Prostate gland (tissue), 2 donors: ENCODE measurements at regions of chr19 and their contacts with region 1.

Region 1: DNA sequence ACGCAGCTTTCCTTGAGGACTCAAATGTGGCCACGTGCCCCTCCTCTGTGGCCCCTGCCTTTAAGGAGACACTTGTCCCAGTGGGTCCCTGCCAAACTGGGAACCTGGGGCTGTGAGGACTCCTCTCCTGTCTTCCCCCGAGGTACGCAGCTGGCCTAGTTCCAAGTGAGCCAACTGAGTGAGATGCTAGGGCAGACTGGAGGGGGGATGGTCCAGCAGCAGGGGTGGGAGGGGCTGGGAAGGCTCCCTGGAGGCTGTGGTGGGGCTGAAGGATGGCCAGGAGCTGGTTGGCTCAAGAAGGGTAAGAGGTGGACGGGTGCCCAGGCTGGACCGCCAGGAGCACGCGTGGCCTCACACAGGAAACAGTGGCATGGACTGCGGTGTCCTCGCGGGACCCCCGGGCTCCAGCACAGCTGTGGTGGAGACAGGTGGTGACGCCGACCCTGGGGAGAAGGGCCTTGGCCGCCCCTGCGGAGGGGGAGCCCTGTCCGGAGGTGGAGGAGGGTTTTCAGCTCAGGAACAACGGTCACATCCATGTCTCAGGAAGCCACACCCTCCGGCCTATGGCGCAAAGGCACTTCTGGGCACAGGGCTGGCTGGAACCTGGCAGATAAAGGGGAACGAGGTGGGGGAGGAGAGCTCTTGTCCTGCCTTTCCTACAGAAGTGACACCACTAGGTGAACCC is 45.8 kb downstream of the MLLT1 start:
- DNase-seq: no peak
- H3K4me3 ChIP-seq: no peak overlapping the region
- H3K27ac ChIP-seq: peak overlapping the region; percentile 60 to 67
- H3K4me1 ChIP-seq: peaks cover 43% of the 10 kb centered on the region
- H3K27me3 ChIP-seq: no peaks in the 10 kb centered on the region
- CTCF ChIP-seq: no peak
- POLR2A ChIP-seq: no peak

Region 2: DNA sequence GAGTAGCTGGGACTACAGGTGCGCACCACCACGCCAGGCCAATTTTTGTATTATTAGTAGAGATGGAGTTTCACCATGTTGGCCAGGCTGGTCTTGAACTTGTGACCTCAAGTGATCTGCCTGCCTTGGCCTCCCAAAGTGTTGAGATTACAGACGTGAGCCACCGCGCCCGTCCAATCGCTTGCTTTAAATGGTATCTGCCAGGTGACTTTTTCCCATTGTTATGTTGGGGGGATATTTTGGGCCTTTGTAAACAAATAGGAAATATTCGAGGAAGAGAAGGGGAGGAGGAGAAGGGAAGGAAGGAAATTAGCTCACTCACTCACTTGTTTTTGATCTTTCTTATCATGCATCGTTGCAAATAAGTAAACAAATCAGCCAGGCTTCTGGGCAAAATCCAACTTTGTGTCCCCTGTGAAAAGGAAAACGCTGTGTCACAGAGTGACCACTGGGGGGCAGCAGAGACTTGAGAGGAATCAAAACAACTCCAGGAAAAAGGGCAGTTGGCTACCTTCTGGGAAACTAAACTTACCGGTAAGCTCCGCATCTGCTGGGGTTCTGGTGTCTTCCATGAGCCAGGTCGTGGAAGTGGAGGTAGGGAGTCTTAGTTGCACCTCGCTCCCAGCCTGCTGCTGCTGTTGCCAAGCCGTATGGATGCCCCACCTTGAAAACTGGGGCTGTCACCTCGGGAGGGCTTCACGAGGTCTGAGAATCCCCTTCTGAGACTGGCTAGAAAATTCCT is 246.7 kb before region 1 on chr19:
- intact Hi-C with region 1: no loop called
- DNase-seq: peak; percentile 84
- H3K4me3 ChIP-seq: peak overlapping the region in 1 of 2 donors; percentile 16
- H3K27ac ChIP-seq: peak overlapping the region; percentile 20 to 33
- H3K4me1 ChIP-seq: peaks cover 8% of the 10 kb centered on the region
- H3K27me3 ChIP-seq: no peaks in the 10 kb centered on the region
- CTCF ChIP-seq: peak; percentile 92 to 98 (median 96)
- POLR2A ChIP-seq: no peak

Region 3: DNA sequence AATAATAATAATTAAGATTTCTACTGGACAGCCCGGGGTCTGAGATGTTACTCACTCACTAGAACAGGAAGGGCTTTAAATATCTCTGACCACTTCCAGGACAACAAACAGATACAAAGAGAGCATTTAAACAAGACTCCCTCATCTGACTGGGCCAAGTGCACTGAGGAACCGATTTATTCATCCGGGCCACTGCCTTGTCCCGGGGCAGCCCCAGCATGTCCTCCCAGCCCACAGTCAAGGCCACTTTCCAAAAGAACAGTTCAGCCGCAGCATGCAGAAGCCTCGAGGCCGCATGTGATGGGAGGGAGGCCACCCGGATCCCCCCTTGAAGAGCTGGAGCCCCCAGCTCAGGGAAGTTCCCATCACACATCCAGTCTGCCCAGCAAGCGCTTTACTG is 15.3 kb after region 1 on chr19:
- intact Hi-C with region 1: no loop called
- DNase-seq: no peak
- H3K4me3 ChIP-seq: no peak overlapping the region
- H3K27ac ChIP-seq: no peak overlapping the region
- H3K4me1 ChIP-seq: no peaks in the 10 kb centered on the region
- H3K27me3 ChIP-seq: no peaks in the 10 kb centered on the region
- CTCF ChIP-seq: no peak
- POLR2A ChIP-seq: no peak

Region 4: DNA sequence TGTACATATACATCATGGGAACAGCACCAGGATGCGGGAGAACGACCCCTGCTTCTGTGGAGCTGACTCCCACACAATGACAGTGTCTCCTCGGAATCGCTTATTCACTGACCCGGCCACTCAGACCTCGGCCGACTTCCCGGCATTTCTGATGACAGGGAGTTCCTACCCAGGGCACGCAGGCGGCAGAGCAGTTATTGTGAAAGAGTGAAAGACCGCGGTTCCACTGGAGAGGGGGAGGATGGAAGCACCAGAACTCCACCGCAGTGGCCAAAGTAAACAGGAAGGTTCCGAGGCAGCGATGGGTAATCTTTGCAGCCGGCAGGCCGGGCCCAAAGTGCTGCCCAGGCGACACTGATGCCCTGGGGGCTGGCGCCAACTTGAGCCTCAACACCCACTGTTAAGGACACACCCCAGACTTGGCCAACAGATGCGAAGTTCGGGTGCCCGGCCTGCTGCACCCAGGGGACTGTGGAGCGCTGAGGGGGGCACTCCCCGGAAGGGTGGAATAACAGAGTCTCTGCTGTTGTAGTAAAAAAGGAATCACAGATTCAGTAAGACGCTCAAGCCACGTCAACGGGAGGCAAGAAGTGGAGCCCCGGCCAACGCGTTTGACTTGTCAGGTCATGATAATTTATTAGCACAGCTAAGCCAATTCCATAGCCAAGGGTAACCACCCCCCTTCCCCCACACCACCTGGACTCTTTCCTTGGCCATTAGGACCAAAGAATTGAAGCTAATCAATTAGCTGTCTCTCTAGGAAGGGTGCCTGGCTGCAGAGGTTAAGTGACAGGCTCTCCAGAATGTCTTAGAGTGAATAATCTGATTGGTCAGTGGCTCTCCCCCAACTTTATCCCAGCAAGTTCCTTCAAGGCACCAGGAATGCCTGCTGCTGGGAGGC is 40.0 kb after region 1 on chr19:
- intact Hi-C with region 1: loop called (anchors 5 kb)
- DNase-seq: peak; percentile 92
- H3K4me3 ChIP-seq: peak overlapping the region in 1 of 2 donors; percentile 10
- H3K27ac ChIP-seq: peak overlapping the region; percentile 79 to 87
- H3K4me1 ChIP-seq: peaks cover 60% of the 10 kb centered on the region
- H3K27me3 ChIP-seq: no peaks in the 10 kb centered on the region
- CTCF ChIP-seq: no peak
- POLR2A ChIP-seq: no peak

Region 5: DNA sequence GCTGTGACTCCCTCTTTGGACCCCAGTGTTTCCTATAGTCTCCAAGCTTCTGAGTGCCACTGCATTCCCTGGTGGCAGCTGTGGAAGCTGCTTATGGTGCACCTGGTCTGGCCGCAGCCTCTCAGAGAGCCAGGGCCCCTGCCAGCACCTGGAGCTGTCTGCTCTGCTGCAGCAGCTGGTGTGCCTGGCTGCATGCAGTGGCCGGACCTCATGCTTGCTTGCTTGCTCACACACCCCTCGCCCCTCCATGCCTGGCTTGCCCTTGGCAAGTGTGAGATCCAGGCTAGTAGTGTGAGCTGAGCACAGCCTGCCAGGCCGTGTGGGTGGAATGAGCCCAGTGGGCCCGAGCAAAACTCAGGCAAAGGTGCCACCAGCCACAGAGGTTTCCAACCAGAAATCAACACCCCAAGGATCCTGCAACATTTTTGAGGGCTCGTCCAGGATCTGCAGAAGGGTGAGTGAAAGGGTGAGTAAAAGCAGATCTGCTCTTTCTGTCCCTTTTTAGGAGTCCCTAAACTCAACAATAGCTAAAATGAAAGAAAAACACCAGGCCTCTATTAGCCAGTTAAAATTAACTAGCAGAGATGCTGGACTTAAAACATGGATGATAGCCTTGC is 53.4 kb after region 1 on chr19:
- intact Hi-C with region 1: no loop called
- DNase-seq: no peak
- H3K4me3 ChIP-seq: no peak overlapping the region
- H3K27ac ChIP-seq: no peak overlapping the region
- H3K4me1 ChIP-seq: no peaks in the 10 kb centered on the region
- H3K27me3 ChIP-seq: no peaks in the 10 kb centered on the region
- CTCF ChIP-seq: no peak
- POLR2A ChIP-seq: no peak

Region 6: DNA sequence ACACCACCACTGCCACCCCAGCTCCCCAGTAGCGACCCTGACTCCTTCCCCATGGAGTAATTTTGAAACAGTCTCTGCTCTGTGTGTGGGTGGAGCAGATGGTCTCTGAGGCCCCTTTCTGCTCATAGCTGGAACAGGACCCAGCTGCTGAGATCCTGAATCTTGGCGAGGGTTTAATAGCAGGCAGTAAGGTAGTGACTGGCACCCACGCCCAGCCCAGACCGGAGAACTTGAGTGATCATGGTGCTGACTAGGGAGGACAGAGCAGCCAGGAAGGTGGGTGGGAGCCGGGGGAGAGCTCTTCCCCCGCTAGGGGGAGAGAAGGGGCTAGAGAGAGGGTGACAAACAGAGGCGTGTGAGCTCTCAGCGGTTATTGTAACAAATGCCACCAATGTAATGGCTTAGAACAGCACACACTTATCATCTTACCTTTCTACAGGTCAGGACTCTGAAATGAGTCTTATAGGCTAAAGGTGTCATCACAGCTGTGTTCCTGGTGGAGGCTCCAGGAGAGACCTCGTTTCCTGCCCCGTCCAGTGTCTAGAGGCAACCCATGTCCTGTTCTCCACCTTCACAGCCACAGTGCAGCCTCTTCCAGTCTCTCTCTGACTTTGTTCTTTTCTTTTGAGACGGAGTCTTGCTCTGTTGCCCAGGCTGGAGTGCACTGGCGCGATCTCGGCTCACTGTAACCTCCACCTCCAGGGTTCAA is 106.7 kb after region 1 on chr19:
- intact Hi-C with region 1: no loop called
- DNase-seq: no peak
- H3K4me3 ChIP-seq: no peak overlapping the region
- H3K27ac ChIP-seq: no peak overlapping the region
- H3K4me1 ChIP-seq: no peaks in the 10 kb centered on the region
- H3K27me3 ChIP-seq: no peaks in the 10 kb centered on the region
- CTCF ChIP-seq: no peak
- POLR2A ChIP-seq: no peak